ENCODE measurements at regions of chr12 and their contacts with region 1.

Region 1: DNA sequence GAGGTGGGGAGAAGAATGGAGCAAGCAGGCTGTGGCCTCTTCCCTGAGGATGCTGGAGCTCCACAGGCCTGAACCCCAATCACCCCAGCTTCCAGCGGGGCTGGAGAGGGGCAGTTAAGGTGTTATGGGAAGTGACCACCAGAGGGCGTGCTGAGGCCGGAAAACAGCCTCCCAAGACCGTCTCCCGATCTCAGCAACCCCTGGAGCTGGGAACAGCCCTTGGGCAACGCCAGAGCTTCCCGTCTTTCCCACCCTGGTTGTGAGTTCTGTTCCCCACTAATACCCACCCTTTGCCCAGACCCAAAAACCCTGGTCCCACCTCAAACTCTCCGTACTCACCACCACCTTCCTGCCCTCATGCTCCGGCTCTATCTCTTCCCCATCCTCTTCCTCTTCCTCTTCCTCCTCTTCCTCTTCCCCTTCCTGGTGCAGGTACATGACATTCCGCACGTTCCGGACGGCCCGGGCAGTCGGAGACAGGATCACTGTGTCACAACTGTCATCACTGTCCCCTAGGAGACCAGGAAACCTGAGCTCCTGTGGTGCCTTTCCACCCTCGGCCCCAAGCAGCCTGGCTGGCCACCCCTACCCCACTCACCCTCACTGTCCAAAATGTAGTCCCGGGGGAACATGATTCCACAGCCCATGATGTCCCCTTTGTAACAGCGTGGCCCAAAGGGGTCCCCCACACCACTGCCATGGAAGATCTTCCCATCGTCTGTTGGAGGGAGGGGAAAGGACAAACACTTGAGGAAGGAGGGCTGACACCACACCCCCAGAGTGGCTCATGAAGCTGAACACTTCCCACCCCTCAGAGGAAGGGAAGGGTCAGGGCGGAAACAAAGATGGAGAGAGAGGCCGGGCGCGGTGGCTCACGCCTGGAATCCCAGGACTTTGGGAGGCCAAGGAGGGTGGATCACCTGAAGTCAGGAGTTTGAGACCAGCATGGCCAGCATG is 12.9 kb downstream of the SPRYD3 start:
- DNase-seq: peak; percentile 78 to 85 (median 81)
- ATAC-seq: peak; percentile 74
- H3K4me3 ChIP-seq: no peak overlapping the region
- H3K4me1 ChIP-seq: peaks cover 11% of the 10 kb centered on the region
- CTCF ChIP-seq: peak; percentile 79

Region 2: DNA sequence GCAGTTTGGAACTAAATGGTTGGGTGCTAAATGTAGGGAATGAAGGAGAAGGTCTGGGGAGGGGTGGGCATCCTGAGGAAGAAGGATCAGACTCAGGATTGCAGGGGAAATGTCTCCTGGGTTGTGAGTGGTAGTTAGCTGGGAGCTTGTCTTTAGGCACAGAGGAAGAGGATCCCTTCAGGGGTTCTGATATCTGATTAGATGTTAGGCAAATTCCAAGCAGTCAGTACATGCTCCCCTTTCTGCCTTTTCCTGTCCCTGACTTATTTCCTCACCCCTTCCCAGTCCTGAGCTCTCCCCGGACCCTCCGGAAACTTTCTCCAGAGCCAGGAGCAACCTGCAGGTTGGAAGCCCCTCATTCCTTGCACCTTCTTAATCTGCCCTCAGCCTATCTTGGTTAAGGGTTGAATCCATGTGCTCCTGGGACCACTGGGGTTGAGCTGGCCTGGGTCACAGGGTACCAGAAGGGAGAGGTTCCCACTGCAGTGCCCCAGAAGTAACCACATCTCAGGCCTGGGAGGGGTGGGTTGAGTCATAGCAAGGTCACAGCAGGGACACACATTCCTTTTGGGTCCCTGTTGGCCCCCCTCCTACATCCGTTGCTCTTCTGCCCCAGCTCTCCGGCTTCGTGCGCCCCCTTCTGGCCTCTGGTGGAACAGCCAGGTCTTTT is 32.9 kb after region 1 on chr12:
- intact Hi-C with region 1: loop called (anchors 5 kb)
- DNase-seq: peak; percentile 86 to 91 (median 89)
- ATAC-seq: peak; percentile 66
- H3K4me3 ChIP-seq: no peak overlapping the region
- H3K4me1 ChIP-seq: peaks cover 17% of the 10 kb centered on the region
- CTCF ChIP-seq: peak; percentile 97

Region 3: DNA sequence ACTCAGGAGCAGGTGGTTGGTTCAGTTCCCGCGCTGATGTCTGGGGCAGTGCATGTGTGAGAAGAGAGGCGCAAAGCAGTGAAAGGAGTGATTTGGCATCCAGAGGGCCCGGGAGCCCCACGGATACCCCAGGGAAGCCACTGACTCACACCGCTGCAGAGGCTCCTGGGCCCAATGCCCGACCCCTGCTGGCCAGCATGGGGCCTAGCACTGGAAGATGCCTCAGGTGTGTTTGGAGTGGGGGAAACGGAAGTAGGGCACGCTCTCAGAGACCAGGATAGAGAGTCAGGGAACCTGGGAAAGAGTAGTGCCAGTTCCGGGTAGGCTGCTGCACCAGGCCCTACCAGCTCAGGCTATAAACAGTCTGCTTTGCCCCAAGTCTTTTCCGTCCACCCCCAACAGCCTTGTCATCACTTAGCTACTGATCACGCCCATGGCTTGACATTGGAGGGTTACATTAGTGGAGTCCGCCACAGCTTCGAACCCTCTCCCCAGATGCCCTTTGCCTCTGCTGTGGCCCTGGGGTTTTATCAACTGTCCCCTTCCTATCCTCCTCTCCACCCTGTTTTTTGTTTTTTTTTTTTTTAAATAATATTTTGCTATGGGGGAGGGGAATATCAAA is 124.0 kb after region 1 on chr12:
- intact Hi-C with region 1: loop called in 1 of 2 experiments (anchors 10 kb)
- DNase-seq: peak; percentile 46 to 71 (median 66)
- ATAC-seq: peak; percentile 89
- H3K4me3 ChIP-seq: no peak overlapping the region
- H3K4me1 ChIP-seq: no peaks in the 10 kb centered on the region
- CTCF ChIP-seq: peak; percentile 23

Measured in mucosa of descending colon (tissue), 3 donors.